Mammary epithelial cell (primary cell): ENCODE measurements at regions of chr19 and their contacts with region 1.

Region 1: DNA sequence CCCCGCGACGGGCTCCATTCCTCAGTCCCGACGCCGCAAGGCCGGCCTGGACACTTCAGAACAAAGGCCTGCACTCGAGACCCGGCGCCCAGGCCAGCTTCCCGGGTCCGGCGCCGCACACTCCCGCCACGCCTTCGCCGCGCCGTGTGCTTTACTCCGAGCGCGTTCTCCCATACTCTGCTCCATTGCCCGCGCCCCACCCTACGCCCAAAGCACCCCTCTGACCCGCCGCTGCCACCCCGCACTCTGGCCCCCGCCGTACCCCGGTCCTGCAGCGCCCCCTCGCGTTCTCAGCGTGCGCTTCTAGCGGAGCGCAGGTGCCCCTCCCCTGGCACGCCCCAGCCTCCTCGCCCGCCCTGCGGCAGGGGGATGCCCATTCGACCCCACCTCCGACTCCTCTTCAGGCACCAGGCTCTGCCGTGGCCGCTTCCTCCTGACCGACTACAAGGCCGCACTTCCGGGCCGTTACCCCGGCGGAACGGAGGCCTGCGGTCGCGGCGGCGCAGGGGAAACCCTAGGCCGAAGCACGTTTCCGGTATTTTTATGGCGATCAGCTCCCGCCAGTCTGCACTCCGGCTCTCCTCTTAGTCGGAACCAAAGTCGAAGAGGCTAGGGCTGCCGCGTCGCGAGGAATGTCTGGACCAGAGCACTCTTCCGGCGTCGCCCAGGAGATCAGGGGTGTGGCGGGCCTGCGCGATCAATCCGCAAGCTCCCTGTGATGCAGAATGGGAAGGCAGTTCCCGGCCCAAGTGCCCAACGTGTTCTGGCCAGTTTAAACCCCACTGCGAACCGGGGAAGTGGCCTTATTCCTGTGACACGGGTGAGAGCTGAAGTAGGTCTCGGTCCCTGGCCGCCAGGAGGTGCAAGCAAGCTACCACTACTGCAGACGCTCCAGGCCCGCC is at the start of gene ZBTB45:
- DNase-seq: peak; percentile 96
- H3K4me3 ChIP-seq: peak within 1 kb of the TSS; percentile 80 to 87 (median 86)
- H3K27ac ChIP-seq: peak within 1 kb of the TSS; percentile 78
- H3K4me1 ChIP-seq: peaks cover 11% of the 10 kb centered on the region
- H3K27me3 ChIP-seq: no peaks in the 10 kb centered on the region
- CTCF ChIP-seq: peak; percentile 49 to 90
- total RNA-seq, gene ZBTB45: 8.2 to 14.1 TPM

Region 2: DNA sequence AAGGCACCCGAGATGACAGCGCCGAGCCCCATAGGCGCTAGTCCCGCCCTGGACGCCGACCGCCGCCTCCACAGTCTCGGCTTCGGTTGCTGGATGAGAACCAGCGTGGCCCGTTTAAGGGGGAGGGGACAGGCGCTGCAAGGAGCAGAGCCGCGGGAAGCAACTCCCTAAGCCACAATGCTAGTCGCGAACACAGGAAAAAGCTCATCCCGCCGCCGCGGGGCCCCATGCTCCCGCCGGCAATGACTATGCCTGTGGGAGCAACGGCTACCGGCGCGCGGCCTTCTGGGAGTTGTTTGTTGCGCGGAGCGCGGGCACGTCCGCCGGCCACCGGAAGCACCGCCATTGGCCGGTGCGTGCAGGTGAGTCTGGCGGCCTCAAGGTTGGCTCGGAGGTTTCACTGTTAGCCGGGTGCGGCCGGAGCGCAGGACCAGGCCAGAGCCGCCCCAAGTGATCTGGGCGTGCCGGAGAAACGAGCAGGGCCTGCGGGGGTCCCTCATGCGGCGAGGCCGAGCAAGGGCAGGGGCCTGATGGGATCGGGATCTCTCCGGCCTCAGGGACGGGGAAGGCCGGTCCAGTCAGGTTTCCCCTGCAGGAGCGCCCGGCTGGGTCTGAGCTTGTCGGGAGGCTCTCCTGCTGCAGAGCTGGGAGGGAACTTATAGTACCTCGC is 290.9 kb before region 1 on chr19 and contains the start of gene ZNF544:
- CTCF ChIA-PET with region 1: no interaction called
- dilution Hi-C with region 1: no loop called
- in situ Hi-C with region 1: no loop called
- intact Hi-C with region 1: loop called (anchors 2 kb)
- DNase-seq: peak; percentile 79
- H3K4me3 ChIP-seq: peak within 1 kb of the TSS; percentile 77 to 98 (median 85)
- H3K27ac ChIP-seq: peak within 1 kb of the TSS; percentile 50
- H3K4me1 ChIP-seq: peaks cover 16% of the 10 kb centered on the region
- H3K27me3 ChIP-seq: no peaks in the 10 kb centered on the region
- CTCF ChIP-seq: peak in 1 of 2 donors; percentile 14
- total RNA-seq, gene ZNF544: 32.3 to 48.3 TPM

Region 3: DNA sequence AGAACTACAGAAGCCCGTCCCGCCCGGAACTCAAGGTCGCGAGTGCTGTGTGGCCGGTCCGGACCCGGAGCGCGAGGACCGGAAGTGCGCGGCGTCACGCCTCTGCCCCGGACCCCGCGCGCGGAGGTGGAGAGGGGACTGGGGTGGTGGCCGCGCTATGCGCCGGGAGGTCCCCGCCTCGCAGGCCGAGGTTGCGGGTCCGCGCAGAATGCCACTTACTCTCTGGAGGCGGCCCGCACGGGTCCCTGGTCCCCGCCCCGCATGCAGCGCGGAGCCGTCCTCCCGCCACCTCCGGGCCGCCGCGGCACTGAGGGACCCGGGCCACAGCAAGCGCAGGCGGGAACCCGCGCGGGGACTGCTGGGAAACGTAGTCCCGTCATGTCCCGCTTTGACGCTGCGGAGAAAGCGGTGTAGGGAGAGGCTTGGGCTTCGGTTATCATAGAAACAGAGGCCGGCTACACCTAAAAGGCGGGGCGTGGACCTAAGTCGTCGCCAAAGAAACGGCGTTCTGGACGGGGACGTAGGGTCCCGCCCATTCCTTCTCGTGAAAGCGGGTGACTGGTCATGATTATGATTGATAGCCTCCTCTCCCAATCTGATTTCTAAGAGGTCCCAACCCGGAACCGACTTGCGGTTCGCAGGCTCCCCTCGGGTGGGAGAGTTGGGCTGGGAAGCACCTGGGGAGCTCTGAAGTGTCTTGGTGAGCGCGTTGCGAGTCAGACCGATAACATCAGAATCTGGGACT is 138.7 kb before region 1 on chr19 and contains the start of gene ZNF837:
- CTCF ChIA-PET with region 1: no interaction called
- dilution Hi-C with region 1: no loop called
- in situ Hi-C with region 1: no loop called
- intact Hi-C with region 1: loop called (anchors 1 kb)
- DNase-seq: peak; percentile 100
- H3K4me3 ChIP-seq: peak within 1 kb of the TSS; percentile 72 to 92 (median 84)
- H3K27ac ChIP-seq: peak within 1 kb of the TSS; percentile 95
- H3K4me1 ChIP-seq: peaks cover 24% of the 10 kb centered on the region
- H3K27me3 ChIP-seq: no peaks in the 10 kb centered on the region
- CTCF ChIP-seq: no peak
- total RNA-seq, gene ZNF837: 2.6 to 4.2 TPM

Region 4: GRCh38 chr19:58460039-58460438 is 59.6 kb before region 1 on chr19:
- CTCF ChIA-PET with region 1: no interaction called
- dilution Hi-C with region 1: loop called (anchors 5 kb)
- in situ Hi-C with region 1: no loop called
- intact Hi-C with region 1: no loop called
- DNase-seq: peak; percentile 73
- H3K4me3 ChIP-seq: no peak overlapping the region
- H3K27ac ChIP-seq: no peak overlapping the region
- H3K4me1 ChIP-seq: peaks cover 9% of the 10 kb centered on the region
- H3K27me3 ChIP-seq: no peaks in the 10 kb centered on the region
- CTCF ChIP-seq: no peak

Region 5: DNA sequence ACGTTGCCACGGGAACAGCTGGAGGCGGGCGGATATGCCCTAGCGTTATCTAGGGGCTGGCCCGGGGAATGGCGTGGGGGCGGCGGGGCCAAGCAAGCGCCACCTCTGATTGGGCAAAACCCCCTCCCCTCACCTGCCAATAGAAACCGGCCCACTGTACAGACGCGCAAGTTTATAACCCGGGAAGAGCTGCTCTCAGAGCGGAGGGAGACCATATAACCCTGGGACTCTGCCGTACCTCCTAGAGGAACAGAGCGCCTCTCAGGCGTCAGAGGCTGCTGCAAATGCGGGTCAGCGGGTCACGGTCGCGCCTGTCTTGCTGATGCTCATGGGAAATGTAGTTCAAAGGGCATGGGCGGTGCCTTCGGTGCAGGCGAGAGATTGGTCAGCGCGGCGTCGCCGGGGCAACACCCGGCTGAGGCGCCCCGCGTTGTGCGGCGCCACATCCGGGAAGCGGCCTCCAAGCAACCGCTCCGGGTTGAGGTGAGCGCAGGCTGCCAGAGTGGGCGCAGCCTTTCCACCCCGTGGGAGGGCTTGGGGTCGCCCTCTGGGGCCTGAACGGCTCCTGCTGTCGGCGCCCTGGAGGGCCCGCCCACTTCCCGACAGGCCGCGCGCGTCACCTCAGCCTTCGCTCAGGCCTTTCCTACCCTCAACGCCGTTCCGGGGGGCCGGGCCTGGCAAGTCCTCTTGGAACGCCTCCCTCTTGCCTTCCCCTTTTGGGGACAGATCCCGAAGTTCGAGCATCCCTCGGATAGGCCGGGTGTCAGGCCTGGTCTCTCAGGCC is 43.7 kb before region 1 on chr19 and contains the start of gene ZNF446:
- CTCF ChIA-PET with region 1: no interaction called
- dilution Hi-C with region 1: no loop called
- in situ Hi-C with region 1: no loop called
- intact Hi-C with region 1: loop called (anchors 1 kb)
- DNase-seq: peak; percentile 97
- H3K4me3 ChIP-seq: peak within 1 kb of the TSS; percentile 61 to 82 (median 77)
- H3K27ac ChIP-seq: peak within 1 kb of the TSS; percentile 66
- H3K4me1 ChIP-seq: peaks cover 23% of the 10 kb centered on the region
- H3K27me3 ChIP-seq: no peaks in the 10 kb centered on the region
- CTCF ChIP-seq: no peak
- total RNA-seq, gene ZNF446: 6.1 to 9.3 TPM

Region 6: GRCh38 chr19:58543826-58544590 is 24.4 kb after region 1 on chr19 and contains the start of gene TRIM28:
- CTCF ChIA-PET with region 1: interaction called, 6 read pairs
- dilution Hi-C with region 1: no loop called
- in situ Hi-C with region 1: no loop called
- intact Hi-C with region 1: loop called (anchors 1 kb)
- DNase-seq: peak; percentile 99
- H3K4me3 ChIP-seq: peak within 1 kb of the TSS; percentile 69 to 90 (median 86)
- H3K27ac ChIP-seq: peak within 1 kb of the TSS; percentile 82
- H3K4me1 ChIP-seq: peaks cover 9% of the 10 kb centered on the region
- H3K27me3 ChIP-seq: no peaks in the 10 kb centered on the region
- CTCF ChIP-seq: no peak
- total RNA-seq, gene TRIM28: 180 to 331 TPM

Region 7: GRCh38 chr19:58572818-58573657 is 53.4 kb after region 1 on chr19 and contains the start of gene MZF1:
- CTCF ChIA-PET with region 1: no interaction called
- dilution Hi-C with region 1: no loop called
- in situ Hi-C with region 1: no loop called
- intact Hi-C with region 1: loop called (anchors 1 kb)
- DNase-seq: peak; percentile 100
- H3K4me3 ChIP-seq: peak within 1 kb of the TSS; percentile 66 to 99 (median 85)
- H3K27ac ChIP-seq: peak within 1 kb of the TSS; percentile 99
- H3K4me1 ChIP-seq: peaks cover 14% of the 10 kb centered on the region
- H3K27me3 ChIP-seq: no peaks in the 10 kb centered on the region
- CTCF ChIP-seq: peak in 1 of 2 donors; percentile 16
- total RNA-seq, gene MZF1: 16.7 to 21.5 TPM